AG04449 (cell line): ENCODE measurements at regions of chr19 and their contacts with region 1.

Region 1: DNA sequence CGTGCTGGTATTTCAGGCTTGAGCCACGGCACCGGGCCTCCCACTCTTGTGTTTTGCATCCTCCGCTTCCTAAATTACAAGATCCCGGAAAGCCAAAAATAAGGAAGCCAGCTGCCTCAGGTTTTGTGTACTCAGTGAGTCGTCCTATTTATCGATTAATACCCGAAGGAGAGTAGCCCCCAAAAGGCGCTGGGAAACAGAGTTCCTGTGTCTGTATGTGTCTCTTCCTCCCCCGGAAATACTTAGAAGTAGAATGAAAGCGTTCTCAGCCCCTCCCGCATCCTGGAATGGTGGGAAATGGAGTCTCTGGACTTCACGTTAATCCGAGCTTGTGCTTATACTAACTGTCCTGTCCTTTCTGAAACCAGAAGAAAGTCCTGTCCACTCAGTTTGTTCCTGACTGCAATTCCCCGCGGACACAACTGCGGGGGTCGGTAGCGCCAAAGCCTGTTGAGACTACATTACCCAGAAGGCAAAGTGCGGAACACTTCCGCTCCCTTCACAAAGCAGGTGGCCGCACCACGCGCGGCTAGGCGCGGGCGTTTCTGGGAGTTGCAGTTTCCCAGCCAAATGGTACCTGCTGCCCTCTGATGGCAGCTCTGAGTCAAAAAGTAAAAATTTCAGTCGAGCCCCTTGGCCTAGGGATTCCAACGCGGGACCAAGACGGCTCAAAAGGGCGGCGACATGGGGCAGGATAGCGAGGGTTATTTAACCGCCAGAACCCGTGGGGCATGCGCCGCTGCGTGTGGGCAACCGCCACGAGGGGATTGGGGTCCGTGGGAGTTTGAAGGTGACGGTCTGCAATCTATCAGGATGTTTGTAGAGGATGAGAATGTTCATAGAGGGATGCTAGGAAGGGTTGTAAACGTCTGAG is 2.2 kb upstream of the GSK3A start:
- DNase-seq: no peak
- H3K4me3 ChIP-seq: peak overlapping the region; percentile 85
- CTCF ChIP-seq: peak; percentile 58

Region 2: DNA sequence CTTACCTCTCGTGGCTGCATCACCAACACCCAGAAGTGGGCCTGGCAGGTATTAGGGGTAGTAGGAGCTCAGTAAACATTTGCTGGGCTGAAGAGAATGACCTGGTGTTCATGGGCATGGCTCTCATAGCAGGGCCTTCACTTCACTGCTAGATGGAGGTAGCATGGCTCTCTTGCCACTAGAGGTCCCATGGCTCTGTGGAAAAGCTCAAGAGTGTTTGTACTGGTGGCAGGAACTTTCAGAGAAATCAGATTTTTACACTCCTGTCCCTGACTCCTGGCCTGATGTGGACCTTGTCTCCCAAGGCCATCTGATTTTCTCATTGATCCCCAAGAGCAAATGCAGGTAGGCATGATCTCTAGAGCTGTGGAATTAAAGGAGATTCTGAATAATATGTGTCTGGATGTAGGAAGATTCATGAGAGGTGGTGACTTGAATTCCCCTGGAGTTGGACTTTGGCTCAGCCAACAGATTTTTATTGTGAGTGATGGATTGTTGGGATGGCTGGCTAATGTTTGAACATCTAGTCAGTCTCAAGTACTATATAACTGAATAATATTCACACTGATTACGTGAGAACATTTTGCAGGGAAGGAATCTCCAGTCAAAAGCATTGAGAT is 162.9 kb before region 1 on chr19:
- CTCF ChIA-PET with region 1: interaction called, 22 read pairs
- POLR2A ChIA-PET with region 1: no interaction called
- DNase-seq: no peak
- H3K4me3 ChIP-seq: no peak overlapping the region
- CTCF ChIP-seq: peak; percentile 72

Region 3: GRCh38 chr19:42121656-42122069 is 122.9 kb before region 1 on chr19:
- CTCF ChIA-PET with region 1: interaction called, 10 read pairs
- POLR2A ChIA-PET with region 1: no interaction called
- DNase-seq: no peak
- H3K4me3 ChIP-seq: no peak overlapping the region
- CTCF ChIP-seq: no peak

Region 4: DNA sequence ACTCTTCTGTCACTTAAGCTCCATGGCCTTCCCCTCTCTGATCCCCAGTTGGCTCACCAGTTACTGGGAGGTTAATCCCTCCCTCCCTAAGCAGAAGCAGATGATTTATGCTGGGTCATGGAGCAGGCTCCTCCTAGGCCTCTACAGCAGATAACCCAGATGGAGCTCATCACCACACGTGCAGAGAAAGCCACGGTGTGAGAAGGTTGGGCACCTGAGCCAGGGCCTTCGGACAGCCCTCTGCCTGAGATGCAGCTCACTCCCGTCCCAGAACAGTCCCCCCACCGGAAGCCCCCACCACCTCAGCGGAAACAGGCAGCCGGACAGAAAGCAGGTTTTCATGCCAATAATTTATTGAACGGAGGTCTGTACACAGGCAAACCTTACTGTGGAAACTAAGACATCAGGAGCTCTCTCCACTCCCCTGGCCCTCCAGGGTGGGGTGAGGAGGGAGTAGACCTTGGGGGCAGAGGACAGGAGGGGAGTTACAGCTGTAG is 14.7 kb before region 1 on chr19:
- CTCF ChIA-PET with region 1: interaction called, 33 read pairs
- POLR2A ChIA-PET with region 1: interaction called, 8 read pairs
- DNase-seq: no peak
- H3K4me3 ChIP-seq: no peak overlapping the region
- CTCF ChIP-seq: no peak

Region 5: GRCh38 chr19:42268704-42269477 is 24.3 kb after region 1 on chr19 and contains the start of gene CIC:
- CTCF ChIA-PET with region 1: interaction called, 21 read pairs
- POLR2A ChIA-PET with region 1: interaction called, 4 read pairs
- DNase-seq: peak; percentile 100
- H3K4me3 ChIP-seq: peak within 1 kb of the TSS; percentile 96
- CTCF ChIP-seq: no peak

Region 6: GRCh38 chr19:42295831-42296525 is 51.4 kb after region 1 on chr19:
- CTCF ChIA-PET with region 1: interaction called, 258 read pairs
- POLR2A ChIA-PET with region 1: interaction called, 6 read pairs
- DNase-seq: no peak
- H3K4me3 ChIP-seq: no peak overlapping the region
- CTCF ChIP-seq: peak; percentile 98

Region 7: DNA sequence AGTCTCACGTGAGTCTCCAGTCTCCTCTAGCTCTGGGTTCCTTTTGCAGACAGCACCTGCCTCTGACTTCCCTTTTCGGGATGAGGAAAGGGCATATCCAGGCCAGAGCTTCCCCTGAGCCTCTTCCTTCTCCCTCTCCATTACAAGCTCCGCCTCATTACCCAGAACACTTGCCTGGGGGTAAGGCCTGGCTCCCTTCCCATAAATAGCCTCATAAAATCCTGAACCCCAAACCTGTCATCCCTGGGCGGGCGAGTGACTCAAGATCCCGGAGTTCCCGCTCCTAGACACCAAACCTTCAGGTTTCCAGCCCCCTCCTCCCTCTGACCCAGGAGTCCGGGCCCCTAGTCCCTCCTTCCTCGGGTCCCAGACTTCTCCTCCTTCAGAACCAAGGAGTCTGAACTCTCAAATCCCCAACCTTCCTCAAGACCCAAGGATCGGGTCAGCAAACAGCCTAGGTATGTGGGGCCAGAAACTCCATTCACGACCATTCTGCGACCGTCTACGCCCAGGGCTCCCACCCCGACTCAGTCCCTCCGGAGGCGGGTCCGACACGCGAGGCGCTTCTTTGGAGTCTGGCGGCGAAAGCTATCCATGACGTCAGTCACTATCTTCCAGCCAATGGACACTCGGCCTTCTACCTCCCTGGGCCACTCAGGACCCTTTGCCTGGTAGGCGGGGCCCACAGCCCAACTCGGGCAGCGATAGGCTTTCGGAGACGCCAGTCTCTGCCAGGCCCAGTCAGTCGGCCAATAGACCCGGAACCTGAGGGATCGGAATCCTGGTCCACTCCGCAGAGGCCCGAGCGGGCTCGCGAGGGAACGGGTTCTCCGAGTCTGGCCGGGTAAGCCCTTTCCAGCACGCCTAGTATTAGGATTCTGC is 152.0 kb after region 1 on chr19:
- CTCF ChIA-PET with region 1: interaction called, 21 read pairs
- POLR2A ChIA-PET with region 1: no interaction called
- DNase-seq: peak; percentile 94
- H3K4me3 ChIP-seq: peak overlapping the region; percentile 80
- CTCF ChIP-seq: no peak